ENCODE measurements at regions of chr5 and their contacts with region 1.

Region 1: DNA sequence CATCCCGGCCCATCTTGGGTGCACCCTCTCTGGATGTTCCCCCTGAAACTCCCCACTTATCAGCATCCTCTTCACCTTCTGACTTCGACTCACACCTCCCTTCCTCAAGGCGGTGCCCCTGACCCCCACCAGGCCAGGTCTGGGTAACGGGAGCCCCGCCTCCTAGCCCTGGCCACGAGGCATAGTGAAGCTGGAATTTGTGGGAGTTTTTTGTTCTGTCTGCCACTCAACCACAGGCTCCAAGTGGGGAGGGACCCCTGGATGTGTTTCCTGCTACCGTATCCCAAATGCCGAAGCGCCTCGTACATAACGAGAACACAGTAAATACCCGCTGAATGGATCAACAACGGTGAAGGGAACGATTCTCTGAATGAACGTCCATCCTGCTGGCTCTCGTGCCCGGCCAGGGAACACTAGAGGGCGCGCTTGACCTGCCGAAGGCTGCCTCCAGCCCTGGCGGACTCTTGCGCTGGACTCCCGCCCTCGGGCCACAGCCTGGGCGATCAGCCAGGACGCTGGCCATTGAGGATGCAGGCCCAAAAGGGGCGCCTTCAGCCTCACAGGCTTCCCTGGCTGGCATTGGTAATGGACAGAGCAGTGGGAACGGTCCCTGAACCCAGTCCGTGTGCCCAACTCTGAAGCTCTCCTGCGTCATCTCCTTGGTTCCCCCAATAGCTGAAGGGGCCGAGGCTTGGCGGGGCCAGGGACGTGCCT is 47.3 kb upstream of the PHYKPL start:
- DNase-seq: peak; percentile 81 to 97 (median 89)
- ATAC-seq: peak; percentile 98
- H3K4me3 ChIP-seq: no peak overlapping the region
- H3K27ac ChIP-seq: no peak overlapping the region
- H3K4me1 ChIP-seq: peaks cover 0 to 8% of the 10 kb centered on the region in 2 donors
- H3K27me3 ChIP-seq: peaks cover 0 to 20% of the 10 kb centered on the region in 2 donors
- CTCF ChIP-seq: peak; percentile 87 to 90

Region 2: GRCh38 chr5:178372142-178372571 is 92.3 kb after region 1 on chr5:
- intact Hi-C with region 1: no loop called
- DNase-seq: peak in 1 of 4 donors; percentile 43
- ATAC-seq: peak; percentile 12
- H3K4me3 ChIP-seq: no peak overlapping the region
- H3K27ac ChIP-seq: peak overlapping the region in 1 of 2 donors; percentile 19
- H3K4me1 ChIP-seq: no peaks in the 10 kb centered on the region
- H3K27me3 ChIP-seq: peaks cover 0 to 10% of the 10 kb centered on the region in 2 donors
- CTCF ChIP-seq: no peak

Region 3: GRCh38 chr5:178551059-178551458 is 271.2 kb after region 1 on chr5:
- intact Hi-C with region 1: loop called in 1 of 2 experiments (anchors 5 kb)
- DNase-seq: peak in 1 of 4 donors; percentile 22
- ATAC-seq: peak; percentile 31
- H3K4me3 ChIP-seq: no peak overlapping the region
- H3K27ac ChIP-seq: no peak overlapping the region
- H3K4me1 ChIP-seq: peaks cover 0 to 4% of the 10 kb centered on the region in 2 donors
- H3K27me3 ChIP-seq: no peaks in the 10 kb centered on the region
- CTCF ChIP-seq: peak; percentile 23 to 39

Region 4: DNA sequence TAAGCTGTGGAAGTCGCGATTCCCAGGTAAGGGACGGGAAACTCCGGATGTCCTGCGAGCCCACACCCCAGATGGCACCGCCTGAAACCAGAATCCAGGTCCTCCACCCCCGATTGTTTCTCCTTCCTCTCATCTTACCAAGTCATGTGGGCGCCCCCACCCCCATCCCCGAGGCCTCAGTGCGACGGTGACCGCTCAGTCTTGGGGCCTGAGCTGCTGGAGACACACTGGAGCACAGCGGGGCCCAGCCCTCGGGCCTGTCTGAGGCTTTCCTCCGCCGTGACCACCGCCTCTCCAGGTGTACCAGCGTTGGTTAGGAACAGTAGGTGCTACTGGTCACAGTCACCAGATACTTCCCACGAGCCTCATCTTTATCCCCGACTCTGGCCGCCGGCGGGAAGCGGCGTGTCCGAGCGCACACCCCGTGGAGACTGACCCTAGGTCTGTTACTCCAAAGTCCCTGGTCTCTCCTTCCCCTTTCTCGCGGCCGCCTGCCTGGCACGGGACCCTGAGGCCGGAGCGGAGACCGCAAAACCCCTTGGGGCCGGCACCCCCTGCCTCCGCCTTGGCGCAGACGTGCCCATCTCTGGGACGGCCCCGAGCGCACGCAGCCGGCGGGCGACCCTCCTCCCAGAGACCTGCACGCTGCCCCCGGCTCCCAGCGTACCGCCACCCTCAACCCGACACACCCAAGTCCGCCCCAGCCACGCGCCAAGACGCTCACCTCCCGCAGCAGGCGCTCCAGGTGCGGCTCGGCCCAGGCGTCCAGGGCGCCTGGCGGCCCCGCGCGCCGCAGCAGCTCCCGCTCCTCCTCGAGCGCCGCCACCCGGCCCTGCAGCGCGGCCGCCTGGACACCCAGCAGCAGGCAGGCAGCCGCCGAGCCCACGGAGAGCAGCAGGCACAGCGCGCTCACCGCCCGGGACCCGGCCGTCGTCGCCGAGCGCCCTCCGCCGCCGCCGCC is 309.6 kb after region 1 on chr5:
- intact Hi-C with region 1: loop called in 1 of 2 experiments (anchors 10 kb)
- DNase-seq: peak in 2 of 4 donors; percentile 52 to 83
- ATAC-seq: peak; percentile 32
- H3K4me3 ChIP-seq: peak overlapping the region; percentile 42 to 46
- H3K27ac ChIP-seq: no peak overlapping the region
- H3K4me1 ChIP-seq: peaks cover 5 to 23% of the 10 kb centered on the region in 2 donors
- H3K27me3 ChIP-seq: peaks cover 0 to 43% of the 10 kb centered on the region in 2 donors
- CTCF ChIP-seq: no peak

Region 5: DNA sequence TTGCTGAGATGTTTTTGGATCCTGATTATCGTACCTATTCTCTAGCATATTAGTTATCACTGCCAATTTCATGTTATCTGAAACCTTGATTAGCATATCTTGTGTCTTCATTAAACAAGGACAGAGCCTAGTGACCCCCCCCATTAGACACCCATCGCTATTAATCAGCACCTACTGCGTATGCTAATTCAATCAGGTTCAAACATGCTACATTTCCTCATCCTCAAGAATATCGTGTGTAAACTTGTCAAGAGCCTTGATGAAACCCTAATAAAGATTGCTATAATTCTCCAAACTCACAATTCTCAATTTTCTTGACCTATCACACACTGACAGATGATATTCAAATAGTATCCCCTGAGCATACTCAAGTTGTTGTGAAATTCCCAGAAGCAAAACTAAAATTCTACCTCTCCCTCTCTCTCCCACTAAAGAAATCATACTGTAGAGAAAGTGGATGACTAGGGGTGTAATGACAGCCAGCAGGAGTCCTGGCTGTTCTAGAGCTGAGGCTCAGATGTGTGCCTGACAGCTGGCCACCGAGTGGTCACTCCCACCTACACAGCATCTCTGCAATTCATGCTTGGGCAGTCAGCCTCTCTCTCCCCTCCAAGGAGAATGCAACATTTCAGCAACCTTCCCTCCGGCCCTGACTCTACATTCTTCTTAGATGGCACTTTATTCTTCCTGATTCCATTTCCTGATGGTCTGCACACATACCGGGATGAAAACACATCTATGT is 459.7 kb after region 1 on chr5:
- intact Hi-C with region 1: no loop called
- DNase-seq: no peak
- ATAC-seq: no peak
- H3K4me3 ChIP-seq: no peak overlapping the region
- H3K27ac ChIP-seq: no peak overlapping the region
- H3K4me1 ChIP-seq: no peaks in the 10 kb centered on the region
- H3K27me3 ChIP-seq: no peaks in the 10 kb centered on the region
- CTCF ChIP-seq: no peak